ENCODE measurements at regions of chr13 and their contacts with region 1.

Region 1: GRCh38 chr13:40069173-40070044 is 413.9 kb downstream of the COG6 start:
- DNase-seq: peak; percentile 51
- H3K4me3 ChIP-seq: no peak overlapping the region
- H3K27ac ChIP-seq: no peak overlapping the region
- H3K4me1 ChIP-seq: peaks cover 6% of the 10 kb centered on the region
- H3K27me3 ChIP-seq: no peaks in the 10 kb centered on the region
- CTCF ChIP-seq: peak; percentile 89 to 92

Region 2: DNA sequence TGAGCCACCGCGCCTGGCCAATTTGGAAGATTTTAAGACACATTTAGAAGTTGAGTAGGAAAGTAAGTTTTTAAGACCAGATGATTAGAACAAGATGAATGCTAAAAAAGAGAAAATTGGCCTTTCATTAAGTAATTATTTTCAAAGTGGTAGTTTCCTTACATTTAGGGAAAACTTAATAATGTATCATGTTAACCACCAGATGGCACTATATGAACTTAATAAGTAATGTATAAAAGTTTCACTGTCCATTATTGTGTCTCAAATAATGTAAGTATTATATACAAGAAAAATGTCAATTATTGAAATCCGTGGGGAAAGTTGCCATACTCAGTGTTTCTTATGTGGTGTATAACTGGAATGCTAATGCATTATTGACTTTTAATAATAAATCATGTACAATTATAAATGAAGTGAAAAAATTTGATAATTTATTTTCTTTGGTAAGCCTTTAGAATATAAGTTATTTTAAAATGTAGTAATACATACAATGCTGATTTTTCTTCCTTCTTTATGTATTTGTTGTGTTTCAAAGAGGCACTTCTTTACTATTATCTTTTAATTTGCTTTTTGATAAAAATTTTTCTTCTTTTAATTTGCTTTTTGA is 384.8 kb before region 1 on chr13:
- CTCF ChIA-PET with region 1: no interaction called
- dilution Hi-C with region 1: no loop called
- in situ Hi-C with region 1: no loop called
- intact Hi-C with region 1: loop called (anchors 5 kb)
- DNase-seq: peak; percentile 16
- H3K4me3 ChIP-seq: no peak overlapping the region
- H3K27ac ChIP-seq: no peak overlapping the region
- H3K4me1 ChIP-seq: no peaks in the 10 kb centered on the region
- H3K27me3 ChIP-seq: no peaks in the 10 kb centered on the region
- CTCF ChIP-seq: peak; percentile 21 to 25

Region 3: DNA sequence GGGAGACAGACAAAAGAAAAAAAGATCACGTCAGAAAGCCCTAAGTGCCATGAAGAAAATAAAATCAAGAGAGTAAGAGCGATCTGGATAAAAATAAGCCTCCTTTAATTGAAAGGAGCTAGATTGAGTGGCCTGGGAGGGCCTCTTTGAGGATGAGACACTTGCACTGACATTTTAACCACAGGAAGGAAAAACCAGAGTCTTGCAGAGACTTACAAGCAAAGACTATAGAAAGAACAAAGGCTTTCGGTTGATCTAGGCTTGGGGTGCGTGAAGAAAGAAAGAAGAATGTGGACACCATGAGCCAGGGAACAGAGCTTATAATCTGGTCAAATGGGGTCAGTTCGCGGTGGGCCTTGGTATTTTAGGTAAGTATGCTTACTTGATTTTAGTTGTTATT is 71.2 kb before region 1 on chr13:
- CTCF ChIA-PET with region 1: no interaction called
- dilution Hi-C with region 1: no loop called
- in situ Hi-C with region 1: no loop called
- intact Hi-C with region 1: no loop called
- DNase-seq: no peak
- H3K4me3 ChIP-seq: no peak overlapping the region
- H3K27ac ChIP-seq: no peak overlapping the region
- H3K4me1 ChIP-seq: no peaks in the 10 kb centered on the region
- H3K27me3 ChIP-seq: no peaks in the 10 kb centered on the region
- CTCF ChIP-seq: no peak

Region 4: GRCh38 chr13:40206241-40207000 is 137.0 kb after region 1 on chr13:
- CTCF ChIA-PET with region 1: no interaction called
- dilution Hi-C with region 1: no loop called
- in situ Hi-C with region 1: no loop called
- intact Hi-C with region 1: loop called (anchors 1 kb)
- DNase-seq: peak; percentile 98
- H3K4me3 ChIP-seq: no peak overlapping the region
- H3K27ac ChIP-seq: peak overlapping the region; percentile 86
- H3K4me1 ChIP-seq: peaks cover 34% of the 10 kb centered on the region
- H3K27me3 ChIP-seq: no peaks in the 10 kb centered on the region
- CTCF ChIP-seq: no peak

Region 5: DNA sequence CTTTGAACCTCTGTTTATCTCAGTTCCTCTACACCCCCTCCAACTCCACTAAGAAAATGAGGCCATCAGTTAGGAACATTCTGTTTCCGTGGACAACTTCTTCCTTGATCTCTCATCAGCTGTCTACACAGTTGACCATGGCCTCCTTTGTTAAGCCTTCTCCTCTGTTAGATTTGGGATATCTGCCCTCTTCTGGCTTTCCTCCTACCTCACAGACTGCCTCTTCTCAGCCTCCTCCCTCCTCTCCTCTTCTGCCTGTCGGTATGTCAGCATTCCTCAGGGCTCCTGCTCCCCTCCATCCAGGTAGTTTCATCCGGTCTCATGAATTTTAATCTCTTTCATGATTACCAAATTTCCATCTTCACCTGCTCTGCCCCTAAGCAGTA is 142.2 kb after region 1 on chr13:
- CTCF ChIA-PET with region 1: no interaction called
- dilution Hi-C with region 1: no loop called
- in situ Hi-C with region 1: no loop called
- intact Hi-C with region 1: loop called (anchors 1 kb)
- DNase-seq: no peak
- H3K4me3 ChIP-seq: no peak overlapping the region
- H3K27ac ChIP-seq: no peak overlapping the region
- H3K4me1 ChIP-seq: peaks cover 15% of the 10 kb centered on the region
- H3K27me3 ChIP-seq: no peaks in the 10 kb centered on the region
- CTCF ChIP-seq: no peak

Region 6: DNA sequence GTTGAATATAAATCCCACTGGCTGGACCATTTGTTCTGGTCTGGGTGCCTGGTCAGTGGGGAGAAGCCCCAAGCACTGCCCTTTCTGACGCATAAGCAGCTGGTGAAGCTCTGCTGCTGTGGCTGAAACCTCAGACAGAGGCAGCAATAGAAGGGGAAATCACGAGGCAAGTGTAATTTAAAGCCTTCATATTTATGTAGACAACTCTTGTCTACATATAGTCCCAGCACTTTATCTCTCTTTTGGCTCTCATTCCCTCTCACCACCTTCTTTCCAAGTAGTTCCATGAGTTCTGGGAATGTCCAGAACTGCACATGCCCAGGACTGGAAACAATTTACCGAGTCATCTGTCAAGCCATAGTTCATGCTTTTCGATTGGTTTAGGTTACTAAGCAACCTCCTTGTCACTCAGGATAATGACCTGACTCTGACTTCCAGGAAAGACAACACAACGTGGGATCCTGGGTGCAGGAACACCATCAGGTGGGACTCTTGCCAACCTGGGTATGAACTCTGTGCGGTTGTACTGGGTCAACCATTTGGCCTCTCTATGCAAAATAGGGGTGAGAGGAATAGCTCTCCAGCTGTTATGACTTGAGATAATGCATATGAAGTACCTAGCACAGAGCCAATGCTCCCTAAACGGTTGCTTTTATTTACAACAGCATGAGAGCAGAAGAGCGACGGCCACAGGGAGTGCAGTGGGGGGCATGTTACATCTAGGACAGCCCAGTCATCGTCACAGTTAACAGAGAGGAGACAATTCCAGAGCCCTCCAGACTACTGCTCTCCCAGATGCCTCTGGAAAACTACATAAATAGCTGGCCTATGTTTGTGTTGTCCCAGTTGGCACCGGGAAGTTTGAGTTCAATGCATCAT is 275.1 kb after region 1 on chr13:
- CTCF ChIA-PET with region 1: no interaction called
- dilution Hi-C with region 1: no loop called
- in situ Hi-C with region 1: no loop called
- intact Hi-C with region 1: loop called (anchors 1 kb)
- DNase-seq: no peak
- H3K4me3 ChIP-seq: no peak overlapping the region
- H3K27ac ChIP-seq: no peak overlapping the region
- H3K4me1 ChIP-seq: no peaks in the 10 kb centered on the region
- H3K27me3 ChIP-seq: no peaks in the 10 kb centered on the region
- CTCF ChIP-seq: no peak

Region 7: GRCh38 chr13:40371531-40372125 is 302.2 kb after region 1 on chr13:
- CTCF ChIA-PET with region 1: no interaction called
- dilution Hi-C with region 1: no loop called
- in situ Hi-C with region 1: no loop called
- intact Hi-C with region 1: no loop called
- DNase-seq: no peak
- H3K4me3 ChIP-seq: no peak overlapping the region
- H3K27ac ChIP-seq: no peak overlapping the region
- H3K4me1 ChIP-seq: no peaks in the 10 kb centered on the region
- H3K27me3 ChIP-seq: peaks cover 2% of the 10 kb centered on the region
- CTCF ChIP-seq: no peak

Region 8: GRCh38 chr13:40401911-40402776 is 332.7 kb after region 1 on chr13:
- CTCF ChIA-PET with region 1: no interaction called
- dilution Hi-C with region 1: no loop called
- in situ Hi-C with region 1: no loop called
- intact Hi-C with region 1: loop called (anchors 5 kb)
- DNase-seq: peak; percentile 89
- H3K4me3 ChIP-seq: no peak overlapping the region
- H3K27ac ChIP-seq: no peak overlapping the region
- H3K4me1 ChIP-seq: peaks cover 24% of the 10 kb centered on the region
- H3K27me3 ChIP-seq: no peaks in the 10 kb centered on the region
- CTCF ChIP-seq: no peak

Measured in mammary epithelial cell (primary cell).